Esophagus muscularis mucosa (tissue), 4 donors: ENCODE measurements at regions of chr2 and their contacts with region 1.

Region 1: GRCh38 chr2:241315093-241315878 is at the start of gene HDLBP:
- DNase-seq: peak; percentile 100
- H3K4me3 ChIP-seq: peak within 1 kb of the TSS; percentile 84 to 93 (median 92)
- H3K27ac ChIP-seq: peak within 1 kb of the TSS; percentile 94 to 99 (median 97)
- H3K4me1 ChIP-seq: peaks cover 40 to 66% (median 60%) of the 10 kb centered on the region in 4 donors
- H3K27me3 ChIP-seq: no peaks in the 10 kb centered on the region
- CTCF ChIP-seq: peak in 2 of 3 experiments; percentile 6 to 17
- EP300 ChIP-seq: no peak
- POLR2A ChIP-seq: peak; percentile 75
- total RNA-seq, gene HDLBP: 263 to 479 (median 304) TPM

Region 2: GRCh38 chr2:241271641-241272297 is 43.5 kb before region 1 on chr2:
- intact Hi-C with region 1: loop called (anchors 2 kb)
- DNase-seq: peak; percentile 96
- H3K4me3 ChIP-seq: peak overlapping the region; percentile 72 to 100 (median 96)
- H3K27ac ChIP-seq: peak overlapping the region; percentile 90 to 99 (median 98)
- H3K4me1 ChIP-seq: peaks cover 33 to 58% (median 49%) of the 10 kb centered on the region in 4 donors
- H3K27me3 ChIP-seq: no peaks in the 10 kb centered on the region
- CTCF ChIP-seq: no peak
- EP300 ChIP-seq: no peak
- POLR2A ChIP-seq: no peak

Region 3: DNA sequence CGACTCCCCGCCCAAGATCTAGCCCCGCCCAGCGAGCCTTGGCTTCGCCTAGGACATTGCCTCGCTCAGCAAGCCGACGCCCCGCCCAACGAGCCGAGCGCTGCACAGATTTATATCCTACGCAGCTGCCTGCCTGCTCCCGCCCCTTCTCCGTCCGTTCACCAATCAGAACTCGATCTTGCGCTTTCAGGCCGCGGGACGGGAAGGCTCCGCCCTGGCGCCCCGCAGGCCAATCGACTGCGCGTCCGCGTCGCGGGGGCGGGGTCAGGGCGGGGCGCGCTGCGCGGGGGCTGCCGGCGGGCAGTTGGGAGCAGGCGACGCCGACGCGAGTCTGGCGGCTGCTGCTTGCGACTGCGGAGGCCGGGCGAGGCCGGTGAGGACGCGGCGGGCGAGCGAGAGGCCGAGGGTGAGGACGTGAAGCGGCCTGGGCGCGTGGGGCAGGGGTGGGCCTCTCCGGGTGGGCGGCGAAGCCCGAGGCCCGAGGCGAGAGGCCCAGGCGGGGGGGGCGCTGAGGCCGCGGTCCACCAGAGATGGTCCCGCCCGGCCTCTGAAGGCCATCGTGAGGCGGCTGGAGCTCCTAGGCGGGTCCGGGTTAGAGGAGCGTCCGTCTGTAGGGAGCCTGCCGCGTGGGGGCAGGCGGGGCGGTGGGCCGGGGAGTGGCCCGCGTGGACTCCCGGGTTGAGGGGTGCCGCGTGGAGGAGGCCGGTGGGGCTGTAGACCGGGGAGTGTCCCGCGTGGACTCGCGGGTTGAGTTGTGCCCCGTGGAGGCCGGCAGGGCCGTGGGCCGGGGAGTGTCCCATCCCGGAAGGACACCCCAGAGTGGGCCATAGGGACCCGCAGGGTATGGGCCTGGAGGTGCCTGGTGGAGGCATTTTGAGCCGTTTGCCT is 40.9 kb after region 1 on chr2 and contains the start of gene FARP2:
- intact Hi-C with region 1: loop called (anchors 5 kb)
- DNase-seq: peak; percentile 100
- H3K4me3 ChIP-seq: peak within 1 kb of the TSS; percentile 64 to 93 (median 83)
- H3K27ac ChIP-seq: peak within 1 kb of the TSS; percentile 87 to 98 (median 92)
- H3K4me1 ChIP-seq: peaks cover 22 to 38% (median 31%) of the 10 kb centered on the region in 4 donors
- H3K27me3 ChIP-seq: no peaks in the 10 kb centered on the region
- CTCF ChIP-seq: no peak
- EP300 ChIP-seq: no peak
- POLR2A ChIP-seq: no peak
- total RNA-seq, gene FARP2: 26.8 to 37.9 (median 30.2) TPM

Region 4: DNA sequence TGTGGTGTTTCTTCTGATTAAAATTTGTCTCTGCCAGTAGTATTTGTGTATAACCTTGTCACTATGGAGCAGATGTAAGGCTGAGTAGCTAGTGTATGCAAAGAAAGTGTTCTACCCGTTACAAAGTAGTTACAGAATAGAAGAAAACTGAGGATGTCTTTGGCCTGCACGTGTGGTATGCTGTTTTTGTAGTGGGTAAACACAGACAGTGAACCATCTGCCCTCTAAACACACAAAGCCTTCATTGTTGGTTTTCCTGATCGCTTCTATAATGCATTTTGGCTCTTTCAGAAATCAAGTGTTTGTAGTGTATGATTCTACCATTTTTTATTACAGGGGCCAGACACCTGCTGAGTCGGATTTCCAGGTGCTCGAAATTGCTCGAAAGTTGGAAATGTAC is 102.3 kb after region 1 on chr2:
- intact Hi-C with region 1: no loop called
- DNase-seq: no peak
- H3K4me3 ChIP-seq: no peak overlapping the region
- H3K27ac ChIP-seq: no peak overlapping the region
- H3K4me1 ChIP-seq: no peaks in the 10 kb centered on the region
- H3K27me3 ChIP-seq: no peaks in the 10 kb centered on the region
- CTCF ChIP-seq: no peak
- EP300 ChIP-seq: no peak
- POLR2A ChIP-seq: no peak